GM10248 (cell line): ENCODE measurements at regions of chr5 and their contacts with region 1.

Region 1: GRCh38 chr5:43040287-43041098 is at the start of gene ANXA2R:
- DNase-seq: peak; percentile 62
- CTCF ChIP-seq: peak; percentile 88

Region 2: GRCh38 chr5:42994246-42995151 is 46.0 kb before region 1 on chr5:
- CTCF ChIA-PET with region 1: interaction called, 51 read pairs
- POLR2A ChIA-PET with region 1: interaction called, 13 read pairs
- DNase-seq: peak; percentile 63
- CTCF ChIP-seq: peak; percentile 86

Region 3: GRCh38 chr5:43019614-43020293 is 20.7 kb before region 1 on chr5:
- CTCF ChIA-PET with region 1: interaction called, 58 read pairs
- POLR2A ChIA-PET with region 1: interaction called, 6 read pairs
- DNase-seq: peak; percentile 67
- CTCF ChIP-seq: peak; percentile 33

Region 4: DNA sequence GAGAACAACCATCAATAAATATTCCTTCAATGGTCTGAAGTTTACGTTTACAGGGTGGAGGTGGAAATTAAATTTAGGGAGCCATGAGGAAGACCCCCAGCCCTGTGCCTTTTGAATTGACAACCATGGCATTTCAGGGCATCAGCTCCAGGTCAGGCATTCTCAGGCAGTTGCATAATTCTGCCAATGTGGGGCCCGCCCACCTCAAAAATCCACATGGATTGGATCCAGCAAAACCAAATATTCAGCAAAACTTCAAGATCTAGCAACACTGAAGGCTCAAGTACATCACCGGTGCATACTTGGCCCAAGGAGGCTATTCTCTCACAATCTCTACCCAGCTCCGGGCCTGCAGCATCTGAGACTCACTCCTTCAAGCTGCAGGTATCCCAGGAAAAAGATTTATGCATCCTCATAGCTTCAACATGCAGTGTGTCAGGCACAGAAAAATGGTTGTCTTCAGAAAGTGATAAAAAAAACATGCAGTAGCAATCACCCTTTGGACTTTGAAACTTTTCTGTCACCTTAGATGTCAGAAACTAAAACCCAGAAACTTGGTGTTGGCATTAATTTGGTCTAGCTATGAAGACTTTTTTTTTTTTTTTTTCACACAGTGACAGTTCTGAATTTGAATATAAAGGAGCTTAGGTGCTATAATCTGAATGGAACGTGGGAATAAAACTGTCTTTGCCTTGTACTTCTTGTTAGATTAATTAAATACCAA is 21.0 kb after region 1 on chr5:
- CTCF ChIA-PET with region 1: interaction called, 26 read pairs
- POLR2A ChIA-PET with region 1: interaction called, 4 read pairs
- DNase-seq: no peak
- CTCF ChIP-seq: no peak

Region 5: GRCh38 chr5:43113546-43113945 is 73.1 kb after region 1 on chr5:
- CTCF ChIA-PET with region 1: no interaction called
- POLR2A ChIA-PET with region 1: no interaction called
- DNase-seq: no peak
- CTCF ChIP-seq: no peak